CD4-positive, alpha-beta memory T cell (primary cell): ENCODE measurements at regions of chr2 and their contacts with region 1.

Region 1: DNA sequence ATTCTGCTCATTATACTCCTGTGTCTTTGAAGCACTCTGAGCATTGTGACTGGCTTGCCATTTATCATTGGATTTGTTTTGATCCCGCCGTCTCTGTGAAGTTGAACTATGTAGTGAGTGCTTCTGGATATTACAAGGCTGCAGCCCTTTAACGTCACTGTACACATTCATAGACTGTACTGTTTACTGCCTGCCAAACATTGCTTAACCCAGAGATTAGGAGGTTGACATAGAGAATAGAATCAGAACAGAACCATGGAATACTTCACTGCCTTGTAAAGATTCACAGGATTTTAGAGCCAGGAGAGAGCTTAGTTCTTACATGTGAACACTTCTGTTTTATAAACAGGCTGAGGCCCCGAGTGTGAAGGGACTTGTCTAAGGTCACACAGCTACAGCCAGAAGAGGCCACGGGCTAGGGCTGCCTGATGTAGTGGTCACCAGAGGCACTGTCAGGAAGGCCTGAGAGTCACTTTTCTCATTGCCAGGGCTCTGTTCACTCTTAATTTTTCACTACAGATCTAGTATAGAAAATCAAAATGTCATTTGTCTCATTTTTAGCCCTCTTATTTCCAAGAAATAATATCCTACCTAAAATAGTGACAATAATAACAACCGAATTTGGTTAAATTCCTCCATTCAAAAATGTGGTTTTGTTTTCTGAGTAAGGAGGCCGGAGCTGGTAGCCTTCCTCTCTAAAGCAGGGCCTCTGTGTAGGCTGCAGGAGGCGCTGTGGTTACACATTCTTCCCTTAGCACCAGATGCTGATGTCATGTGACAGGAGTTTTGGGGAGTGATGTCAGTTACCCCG is 87.9 kb downstream of the UGGT1 start:
- DNase-seq: peak; percentile 26 to 41 (median 38)
- H3K4me3 ChIP-seq: no peak overlapping the region
- H3K4me3 Mint-ChIP-seq: no peak overlapping the region
- H3K27ac ChIP-seq: no peak overlapping the region
- H3K27ac Mint-ChIP-seq: peak overlapping the region in 2 of 7 donors; percentile 45 to 71
- H3K4me1 ChIP-seq: no peaks in the 10 kb centered on the region
- H3K4me1 Mint-ChIP-seq: no peaks in the 10 kb centered on the region
- H3K27me3 ChIP-seq: no peaks in the 10 kb centered on the region
- H3K27me3 Mint-ChIP-seq: no peaks in the 10 kb centered on the region

Region 2: GRCh38 chr2:127909019-127909418 is 269.8 kb before region 1 on chr2:
- CTCF ChIA-PET with region 1: no interaction called
- POLR2A ChIA-PET with region 1: no interaction called
- intact Hi-C with region 1: no loop called
- DNase-seq: no peak
- H3K4me3 ChIP-seq: no peak overlapping the region
- H3K4me3 Mint-ChIP-seq: no peak overlapping the region
- H3K27ac ChIP-seq: no peak overlapping the region
- H3K27ac Mint-ChIP-seq: no peak overlapping the region
- H3K4me1 ChIP-seq: no peaks in the 10 kb centered on the region
- H3K4me1 Mint-ChIP-seq: no peaks in the 10 kb centered on the region
- H3K27me3 ChIP-seq: no peaks in the 10 kb centered on the region
- H3K27me3 Mint-ChIP-seq: peaks cover 7 to 13% of the 10 kb centered on the region in 2 donors

Region 3: GRCh38 chr2:128232965-128233789 is 54.3 kb after region 1 on chr2:
- CTCF ChIA-PET with region 1: interaction called, 5 read pairs
- POLR2A ChIA-PET with region 1: no interaction called
- intact Hi-C with region 1: loop called (anchors 1 kb)
- DNase-seq: peak; percentile 72 to 77 (median 76)
- H3K4me3 ChIP-seq: peak overlapping the region; percentile 11 to 70
- H3K4me3 Mint-ChIP-seq: peak overlapping the region; percentile 85 to 93 (median 88)
- H3K27ac ChIP-seq: no peak overlapping the region
- H3K27ac Mint-ChIP-seq: peak overlapping the region in 4 of 7 donors; percentile 36 to 78 (median 62)
- H3K4me1 ChIP-seq: peaks cover 5% of the 10 kb centered on the region
- H3K4me1 Mint-ChIP-seq: peaks cover 1 to 7% (median 4%) of the 10 kb centered on the region in 4 donors
- H3K27me3 ChIP-seq: no peaks in the 10 kb centered on the region
- H3K27me3 Mint-ChIP-seq: peaks cover 2 to 8% of the 10 kb centered on the region in 2 donors